Activated CD4-positive, alpha-beta memory T cell treated with anti-CD3 and anti-CD28 coated beads, Interleukin-2, amount 10 ng/mL, durations not matched to agents 7 days and 5 days (primary cell): ENCODE measurements at regions of chrX and their contacts with region 1.

Region 1: GRCh38 chrX:39162322-39162735 is 361.1 kb downstream of the MID1IP1 start:
- DNase-seq: peak; percentile 31
- H3K4me3 Mint-ChIP-seq: peak overlapping the region; percentile 46
- H3K27ac Mint-ChIP-seq: peak overlapping the region; percentile 21
- H3K4me1 Mint-ChIP-seq: peaks cover 43% of the 10 kb centered on the region
- H3K27me3 Mint-ChIP-seq: peaks cover 4% of the 10 kb centered on the region

Region 2: DNA sequence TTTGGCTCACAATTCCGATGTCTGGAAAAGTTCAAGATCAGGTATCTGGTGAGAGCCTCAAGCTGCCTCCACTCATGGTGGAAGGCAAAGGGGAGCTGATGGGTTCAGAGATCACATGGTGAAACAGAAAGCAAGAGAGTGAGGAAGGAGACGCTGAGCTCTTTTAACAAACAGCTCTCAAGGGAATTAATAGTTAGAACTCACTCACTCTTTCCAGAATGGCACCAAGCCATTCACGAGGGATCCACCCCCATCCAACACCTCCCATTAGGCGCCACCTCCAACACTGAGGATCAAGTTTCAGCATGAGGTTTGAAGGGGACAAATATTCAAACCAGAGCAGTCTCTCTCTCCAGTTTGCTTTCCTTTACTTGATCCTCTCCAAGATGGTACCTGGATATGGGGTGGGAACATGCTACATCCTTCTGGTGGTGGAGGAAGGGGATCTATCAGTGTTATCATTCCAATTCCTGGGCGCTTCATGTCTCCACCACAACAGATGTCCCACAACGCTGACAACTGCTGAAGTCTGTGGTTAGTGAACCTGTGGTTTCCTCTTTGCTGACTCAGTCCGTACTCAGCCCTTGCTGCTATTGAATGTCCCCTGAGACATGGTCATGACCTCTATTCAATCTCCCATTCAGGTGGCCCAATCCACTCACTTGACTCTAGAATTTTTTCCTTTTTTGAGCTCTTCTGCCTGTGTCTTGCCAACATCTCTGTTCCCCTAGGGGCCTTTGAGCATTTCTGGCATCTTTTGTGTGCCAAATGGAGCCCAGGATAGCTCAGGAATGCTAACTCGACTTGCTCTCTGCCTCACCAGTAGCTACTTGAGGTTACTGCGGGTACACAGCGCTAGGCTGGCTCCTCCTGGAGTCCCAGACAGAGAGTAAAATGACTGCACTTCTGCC is 34.1 kb after region 1 on chrX:
- CTCF ChIA-PET with region 1: interaction called, 5 read pairs
- POLR2A ChIA-PET with region 1: interaction called, 13 read pairs
- DNase-seq: peak; percentile 67
- H3K4me3 Mint-ChIP-seq: peak overlapping the region; percentile 46
- H3K27ac Mint-ChIP-seq: peak overlapping the region; percentile 79
- H3K4me1 Mint-ChIP-seq: peaks cover 57% of the 10 kb centered on the region
- H3K27me3 Mint-ChIP-seq: no peaks in the 10 kb centered on the region